Caco-2 (cell line): ENCODE measurements at regions of chr20 and their contacts with region 1.

Region 1: DNA sequence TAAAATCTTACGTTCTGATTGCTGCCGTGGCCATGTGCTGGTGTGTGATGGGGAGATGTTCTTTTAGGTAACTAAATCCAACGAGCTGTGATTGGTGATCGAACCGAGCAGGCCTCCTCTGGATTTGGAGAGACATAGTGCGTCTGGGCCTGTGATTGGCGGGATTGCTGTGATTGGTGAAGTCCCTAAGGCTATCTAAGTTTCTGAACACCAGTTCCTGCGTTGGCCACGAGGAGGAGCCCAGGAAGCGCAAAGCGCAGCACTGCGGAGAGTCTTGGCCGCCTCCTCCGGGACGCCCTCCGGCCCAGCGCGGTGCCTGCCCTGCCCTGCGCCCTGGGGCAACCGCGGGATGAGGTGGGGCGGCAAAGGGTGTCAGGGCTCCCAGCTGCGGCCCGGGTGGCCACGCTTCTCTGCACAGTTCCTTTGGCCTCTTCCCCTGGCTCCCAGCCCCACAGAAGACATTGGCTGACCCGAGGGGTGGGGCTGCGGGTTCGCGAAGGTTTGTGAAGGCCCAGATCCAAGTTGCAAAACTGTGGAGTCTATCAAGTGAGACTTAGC is 33.0 kb downstream of the HNF4A start:
- DNase-seq: peak in 1 of 2 experiments; percentile 75
- H3K4me3 ChIP-seq: no peak overlapping the region
- H3K4me3 Mint-ChIP-seq: no peak overlapping the region
- H3K27ac Mint-ChIP-seq: peak overlapping the region; percentile 18
- H3K4me1 ChIP-seq: peaks cover 60% of the 10 kb centered on the region
- H3K4me1 Mint-ChIP-seq: peaks cover 53% of the 10 kb centered on the region
- H3K27me3 ChIP-seq: no peaks in the 10 kb centered on the region
- H3K27me3 Mint-ChIP-seq: no peaks in the 10 kb centered on the region
- CTCF ChIP-seq: peak; percentile 73 to 78

Region 2: DNA sequence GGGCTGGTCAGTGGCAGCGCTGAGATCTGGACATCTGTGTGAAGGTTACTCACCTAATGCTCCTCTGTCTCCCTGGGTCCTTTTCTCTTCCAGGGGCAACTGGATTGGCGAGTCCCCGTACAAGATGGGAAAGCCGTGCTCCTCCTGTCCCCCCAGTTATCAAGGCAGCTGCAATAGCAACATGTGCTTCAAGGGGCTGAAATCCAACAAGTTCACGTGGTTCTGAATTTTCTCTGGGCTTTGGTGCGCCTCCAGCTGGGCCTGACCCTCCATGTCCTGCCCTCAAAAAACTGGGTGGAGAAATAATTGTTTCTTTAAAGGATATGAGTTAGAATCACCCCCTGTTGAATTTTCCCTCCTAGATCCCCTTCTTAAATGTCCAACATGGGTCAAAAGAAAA is 38.0 kb before region 1 on chr20:
- CTCF ChIA-PET with region 1: interaction called, 13 read pairs
- POLR2A ChIA-PET with region 1: interaction called, 4 read pairs
- intact Hi-C with region 1: loop called (anchors 1 kb)
- DNase-seq: no peak
- H3K4me3 ChIP-seq: no peak overlapping the region
- H3K4me3 Mint-ChIP-seq: no peak overlapping the region
- H3K27ac Mint-ChIP-seq: no peak overlapping the region
- H3K4me1 ChIP-seq: peaks cover 60% of the 10 kb centered on the region
- H3K4me1 Mint-ChIP-seq: peaks cover 40% of the 10 kb centered on the region
- H3K27me3 ChIP-seq: no peaks in the 10 kb centered on the region
- H3K27me3 Mint-ChIP-seq: no peaks in the 10 kb centered on the region
- CTCF ChIP-seq: no peak

Region 3: DNA sequence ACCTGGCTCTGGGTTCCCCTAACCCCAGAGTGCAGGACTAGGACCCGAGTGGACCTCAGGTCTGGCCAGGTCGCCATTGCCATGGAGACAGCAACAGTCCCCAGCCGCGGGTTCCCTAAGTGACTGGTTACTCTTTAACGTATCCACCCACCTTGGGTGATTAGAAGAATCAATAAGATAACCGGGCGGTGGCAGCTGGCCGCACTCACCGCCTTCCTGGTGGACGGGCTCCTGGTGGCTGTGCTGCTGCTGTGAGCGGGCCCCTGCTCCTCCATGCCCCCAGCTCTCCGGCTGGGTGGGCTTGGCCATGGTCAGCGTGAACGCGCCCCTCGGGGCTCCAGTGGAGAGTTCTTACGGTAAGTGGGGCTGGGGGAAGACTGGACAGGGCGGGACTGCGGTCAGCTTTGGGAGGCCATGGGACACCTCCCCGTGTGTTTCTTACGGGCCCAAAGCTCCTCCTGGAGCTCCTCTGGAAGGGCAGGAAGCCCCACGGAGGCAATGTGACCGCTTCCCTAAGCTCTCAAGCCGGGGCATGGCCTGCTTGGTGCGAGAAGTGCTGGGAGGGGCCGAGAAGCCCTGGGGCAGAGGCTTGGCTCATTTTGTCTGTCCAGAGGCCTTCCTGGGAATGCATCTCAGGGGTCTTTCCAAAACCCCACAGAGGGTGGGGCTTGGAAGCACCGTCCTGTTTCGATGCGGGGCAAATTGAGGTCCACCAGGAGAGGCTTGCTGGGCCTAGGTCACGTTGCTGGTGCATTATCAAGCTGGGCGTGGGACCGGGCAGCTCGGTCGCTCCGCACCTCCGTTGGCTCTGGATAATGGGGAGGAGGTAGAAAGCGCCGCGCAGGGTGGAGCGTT is 32.8 kb before region 1 on chr20 and contains the start of gene HNF4A:
- CTCF ChIA-PET with region 1: interaction called, 13 read pairs
- POLR2A ChIA-PET with region 1: interaction called, 4 read pairs
- intact Hi-C with region 1: loop called (anchors 1 kb)
- DNase-seq: peak; percentile 96 to 97
- H3K4me3 ChIP-seq: peak within 1 kb of the TSS; percentile 77
- H3K4me3 Mint-ChIP-seq: peak within 1 kb of the TSS; percentile 93
- H3K27ac Mint-ChIP-seq: peak within 1 kb of the TSS; percentile 98
- H3K4me1 ChIP-seq: peaks cover 48% of the 10 kb centered on the region
- H3K4me1 Mint-ChIP-seq: peaks cover 41% of the 10 kb centered on the region
- H3K27me3 ChIP-seq: no peaks in the 10 kb centered on the region
- H3K27me3 Mint-ChIP-seq: no peaks in the 10 kb centered on the region
- CTCF ChIP-seq: no peak
- total RNA-seq, gene HNF4A: 256 and 292 TPM in 2 replicates

Region 4: GRCh38 chr20:44370639-44371220 is 17.8 kb before region 1 on chr20:
- CTCF ChIA-PET with region 1: interaction called, 22 read pairs
- POLR2A ChIA-PET with region 1: interaction called, 9 read pairs
- intact Hi-C with region 1: loop called (anchors 1 kb)
- DNase-seq: peak; percentile 98 to 99
- H3K4me3 ChIP-seq: no peak overlapping the region
- H3K4me3 Mint-ChIP-seq: peak overlapping the region; percentile 69
- H3K27ac Mint-ChIP-seq: peak overlapping the region; percentile 95
- H3K4me1 ChIP-seq: peaks cover 52% of the 10 kb centered on the region
- H3K4me1 Mint-ChIP-seq: peaks cover 47% of the 10 kb centered on the region
- H3K27me3 ChIP-seq: no peaks in the 10 kb centered on the region
- H3K27me3 Mint-ChIP-seq: no peaks in the 10 kb centered on the region
- CTCF ChIP-seq: peak in 1 of 2 experiments; percentile 13

Region 5: GRCh38 chr20:44409132-44409600 is 20.6 kb after region 1 on chr20:
- CTCF ChIA-PET with region 1: interaction called, 21 read pairs
- POLR2A ChIA-PET with region 1: interaction called, 21 read pairs
- intact Hi-C with region 1: no loop called
- DNase-seq: no peak
- H3K4me3 ChIP-seq: no peak overlapping the region
- H3K4me3 Mint-ChIP-seq: no peak overlapping the region
- H3K27ac Mint-ChIP-seq: peak overlapping the region; percentile 86
- H3K4me1 ChIP-seq: peaks cover 97% of the 10 kb centered on the region
- H3K4me1 Mint-ChIP-seq: peaks cover 74% of the 10 kb centered on the region
- H3K27me3 ChIP-seq: no peaks in the 10 kb centered on the region
- H3K27me3 Mint-ChIP-seq: no peaks in the 10 kb centered on the region
- CTCF ChIP-seq: no peak

Region 6: DNA sequence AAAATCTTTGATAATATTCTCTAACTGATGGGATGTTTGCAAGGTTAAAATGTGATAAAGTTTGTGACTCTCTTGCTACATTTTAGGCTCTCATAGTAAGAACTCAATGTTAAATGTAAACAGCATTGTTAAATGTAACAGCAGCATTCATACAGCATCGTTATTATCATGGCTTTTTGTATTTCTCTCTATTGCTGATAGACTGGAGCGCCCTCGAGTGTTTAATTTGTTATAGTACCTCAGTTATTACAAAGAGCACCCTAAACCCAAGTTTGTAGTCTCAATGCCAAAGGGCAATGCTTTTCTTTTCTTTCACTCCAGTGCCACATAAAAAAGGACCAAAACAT is 72.2 kb after region 1 on chr20:
- CTCF ChIA-PET with region 1: interaction called, 5 read pairs
- POLR2A ChIA-PET with region 1: no interaction called
- intact Hi-C with region 1: loop called (anchors 1 kb)
- DNase-seq: peak in 1 of 2 experiments; percentile 69
- H3K4me3 ChIP-seq: no peak overlapping the region
- H3K4me3 Mint-ChIP-seq: no peak overlapping the region
- H3K27ac Mint-ChIP-seq: no peak overlapping the region
- H3K4me1 ChIP-seq: peaks cover 9% of the 10 kb centered on the region
- H3K4me1 Mint-ChIP-seq: no peaks in the 10 kb centered on the region
- H3K27me3 ChIP-seq: no peaks in the 10 kb centered on the region
- H3K27me3 Mint-ChIP-seq: no peaks in the 10 kb centered on the region
- CTCF ChIP-seq: peak; percentile 73 to 82